ENCODE measurements at regions of chr15 and their contacts with region 1.

Region 1: DNA sequence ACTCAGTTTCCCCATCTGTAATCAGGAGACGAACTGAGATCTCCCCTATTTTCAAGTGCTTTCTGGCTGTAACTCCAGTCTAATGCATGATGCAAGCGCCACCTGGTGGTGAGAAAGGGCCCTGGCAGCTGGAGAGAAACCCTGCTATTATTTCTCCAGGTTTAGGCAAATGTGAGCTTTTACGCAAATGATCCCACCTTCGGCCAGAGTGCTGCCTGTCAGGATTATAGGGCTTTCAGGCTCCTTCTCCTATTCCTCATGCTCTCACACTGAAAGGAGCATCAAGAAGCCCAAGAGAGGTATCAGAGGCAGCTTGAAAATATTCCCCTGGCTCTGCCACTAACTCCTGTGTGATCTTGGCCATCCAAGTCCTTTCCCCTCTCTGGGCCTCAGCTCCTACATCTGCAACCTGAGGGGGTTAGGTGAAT is 93.9 kb upstream of the RASGRF1 start:
- DNase-seq: peak in 1 of 2 experiments; percentile 59
- H3K4me3 ChIP-seq: no peak overlapping the region
- H3K27ac ChIP-seq: no peak overlapping the region
- H3K4me1 ChIP-seq: peaks cover 9% of the 10 kb centered on the region
- H3K27me3 ChIP-seq: no peaks in the 10 kb centered on the region
- CTCF ChIP-seq: peak; percentile 98

Region 2: DNA sequence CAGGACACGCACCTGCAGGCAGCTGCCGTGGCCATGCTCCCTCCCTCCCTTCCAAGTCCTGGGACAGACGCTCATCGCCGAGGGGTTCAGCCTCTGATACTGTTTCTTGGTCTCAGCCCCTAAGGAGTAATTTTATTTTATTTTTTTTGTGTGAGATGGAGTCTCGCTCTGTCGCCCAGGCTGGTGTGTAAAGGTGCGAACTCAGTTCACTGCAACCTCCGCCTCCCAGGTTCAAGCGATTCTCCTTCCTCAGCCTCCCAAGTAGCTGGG is 426.9 kb before region 1 on chr15:
- CTCF ChIA-PET with region 1: no interaction called
- POLR2A ChIA-PET with region 1: no interaction called
- intact Hi-C with region 1: loop called (anchors 2 kb)
- DNase-seq: no peak
- H3K4me3 ChIP-seq: no peak overlapping the region
- H3K27ac ChIP-seq: no peak overlapping the region
- H3K4me1 ChIP-seq: 0 out of 2 replicates have a peak, but pooled peaks cover 4% of the 10 kb centered on the region
- H3K27me3 ChIP-seq: no peaks in the 10 kb centered on the region
- CTCF ChIP-seq: no peak

Region 3: GRCh38 chr15:78909791-78910228 is 274.7 kb before region 1 on chr15:
- CTCF ChIA-PET with region 1: no interaction called
- POLR2A ChIA-PET with region 1: no interaction called
- intact Hi-C with region 1: loop called (anchors 1 kb)
- DNase-seq: no peak
- H3K4me3 ChIP-seq: no peak overlapping the region
- H3K27ac ChIP-seq: no peak overlapping the region
- H3K4me1 ChIP-seq: peaks cover 22% of the 10 kb centered on the region
- H3K27me3 ChIP-seq: no peaks in the 10 kb centered on the region
- CTCF ChIP-seq: peak; percentile 84

Region 4: DNA sequence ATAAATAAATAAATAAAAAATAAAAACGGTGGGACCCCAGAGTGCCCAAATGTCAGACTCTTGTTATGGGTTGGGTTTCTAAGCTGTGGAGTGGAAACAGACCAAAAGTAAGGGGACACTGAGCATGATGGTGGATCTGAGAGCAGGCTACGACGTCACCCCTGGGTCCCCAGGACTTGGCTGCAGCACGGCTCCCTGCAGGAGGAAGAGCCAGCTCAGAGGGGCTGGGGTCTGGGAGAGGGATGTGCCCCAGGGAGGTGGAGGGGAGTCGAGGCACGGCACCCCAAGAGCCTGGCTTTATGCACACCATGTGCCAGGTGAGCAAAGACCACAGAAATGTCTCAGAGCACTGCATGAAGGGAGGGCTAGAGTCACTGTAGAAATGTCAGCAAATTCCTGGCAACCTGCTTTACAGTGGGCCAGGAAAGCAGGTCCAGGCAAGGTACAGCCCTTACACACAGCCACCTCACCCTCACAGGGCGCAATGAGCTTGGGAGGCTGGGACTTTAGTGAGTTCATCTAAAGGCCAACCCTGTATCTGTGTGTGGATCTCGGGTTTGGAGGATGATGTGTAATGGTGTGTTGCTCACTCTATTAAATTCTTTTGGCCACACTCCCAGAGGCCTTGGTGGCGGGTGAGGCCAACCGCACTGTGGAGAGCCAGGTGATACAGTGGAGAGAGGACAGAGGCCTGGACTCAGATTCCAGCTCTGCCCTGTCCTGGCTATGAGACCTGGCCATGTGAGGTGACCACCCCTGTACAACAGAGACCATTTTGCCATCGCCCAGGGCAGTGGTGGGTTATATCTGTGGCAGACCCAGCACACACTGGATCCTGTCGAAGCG is 253.7 kb before region 1 on chr15:
- CTCF ChIA-PET with region 1: interaction called, 3 read pairs
- POLR2A ChIA-PET with region 1: no interaction called
- intact Hi-C with region 1: loop called (anchors 5 kb)
- DNase-seq: peak; percentile 89 to 98
- H3K4me3 ChIP-seq: no peak overlapping the region
- H3K27ac ChIP-seq: peak overlapping the region; percentile 85
- H3K4me1 ChIP-seq: peaks cover 22% of the 10 kb centered on the region
- H3K27me3 ChIP-seq: no peaks in the 10 kb centered on the region
- CTCF ChIP-seq: no peak

Region 5: GRCh38 chr15:79028411-79028964 is 156.0 kb before region 1 on chr15:
- CTCF ChIA-PET with region 1: interaction called, 19 read pairs
- POLR2A ChIA-PET with region 1: no interaction called
- intact Hi-C with region 1: loop called (anchors 1 kb)
- DNase-seq: peak in 1 of 2 experiments; percentile 46
- H3K4me3 ChIP-seq: no peak overlapping the region
- H3K27ac ChIP-seq: no peak overlapping the region
- H3K4me1 ChIP-seq: no peaks in the 10 kb centered on the region
- H3K27me3 ChIP-seq: no peaks in the 10 kb centered on the region
- CTCF ChIP-seq: peak; percentile 98

Measured in PC-9 (cell line).